Activated B cell treated with CpG ODN at 0.5 μM for 24 hours (primary cell): ENCODE measurements at regions of chr17 and their contacts with region 1.

Region 1: DNA sequence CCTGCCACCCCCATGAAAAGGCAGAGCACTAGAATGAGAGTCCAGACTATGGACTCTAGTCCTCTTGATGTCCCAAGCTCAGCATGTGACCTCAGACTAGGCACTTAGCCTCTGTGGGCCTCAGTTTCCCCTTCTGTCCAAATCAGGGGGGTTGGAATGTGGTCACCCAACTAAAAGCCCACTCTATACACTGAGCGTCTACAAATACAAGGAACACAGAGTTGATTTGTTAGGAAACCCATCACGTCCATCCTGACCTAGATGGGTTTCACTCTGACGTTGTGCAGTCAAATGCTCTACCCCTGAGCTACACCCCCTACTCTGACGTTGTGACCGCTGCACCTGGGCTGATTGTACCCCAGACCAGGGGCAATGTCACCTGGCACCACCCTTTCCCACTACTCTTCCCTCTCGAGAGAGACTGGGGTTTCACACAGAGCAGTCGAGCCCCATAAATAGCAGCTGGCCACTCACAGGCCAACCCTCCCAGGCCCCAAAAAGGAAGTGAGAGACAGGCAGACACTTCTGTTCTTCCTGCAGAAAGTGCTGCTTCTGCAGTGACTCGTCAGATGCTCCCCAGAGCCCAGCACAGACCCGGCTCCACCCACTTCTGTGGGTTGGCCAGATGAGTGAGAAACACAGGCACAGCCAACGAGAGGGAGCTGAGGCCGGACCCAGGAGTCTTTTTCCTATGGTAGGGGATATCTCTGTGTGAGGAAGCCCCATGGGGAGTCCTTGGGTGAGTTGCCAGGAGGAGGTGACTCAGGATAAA is 16.1 kb upstream of the TNFRSF13B start:
- DNase-seq: peak; percentile 78
- ATAC-seq: peak; percentile 80
- H3K4me3 Mint-ChIP-seq: peak overlapping the region; percentile 84
- H3K27ac Mint-ChIP-seq: peak overlapping the region; percentile 97
- H3K4me1 Mint-ChIP-seq: peaks cover 78% of the 10 kb centered on the region
- H3K27me3 Mint-ChIP-seq: no peaks in the 10 kb centered on the region
- CTCF ChIP-seq: no peak

Region 2: DNA sequence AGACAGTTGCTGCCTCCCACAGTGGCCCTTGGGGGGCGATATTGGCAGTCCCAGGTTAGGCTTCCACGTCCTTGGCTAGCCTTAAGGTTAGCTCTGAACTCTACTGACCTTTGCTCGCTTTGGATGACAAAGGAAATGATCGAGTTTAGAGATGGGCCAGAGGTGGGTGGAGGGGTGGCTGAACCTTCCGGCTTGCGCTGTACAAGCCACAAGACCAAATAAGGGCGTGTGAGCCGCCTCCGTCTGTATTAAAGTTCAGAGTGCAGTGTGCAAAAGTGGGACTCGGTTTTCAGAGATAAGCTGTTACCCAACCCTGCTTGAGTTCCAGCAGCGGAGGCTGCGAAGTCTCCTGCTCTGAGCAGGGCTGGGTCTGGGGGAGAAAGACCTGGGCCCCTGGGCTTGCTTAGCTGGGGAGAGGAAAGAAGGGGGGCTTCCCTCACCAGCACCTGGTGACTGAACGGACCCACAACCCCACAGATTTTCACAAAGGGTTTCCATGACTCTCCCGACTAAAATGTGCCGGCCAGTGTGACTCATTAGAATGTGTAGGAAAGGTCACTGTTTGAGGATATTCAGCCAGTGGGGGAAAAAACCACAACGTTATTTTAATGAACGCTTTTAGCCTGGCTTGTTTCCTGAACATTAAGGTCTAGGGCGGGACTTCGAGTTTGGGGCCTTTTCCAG is 701.9 kb before region 1 on chr17:
- CTCF ChIA-PET with region 1: no interaction called
- POLR2A ChIA-PET with region 1: no interaction called
- intact Hi-C with region 1: no loop called
- DNase-seq: peak; percentile 41
- ATAC-seq: peak; percentile 74
- H3K4me3 Mint-ChIP-seq: peak overlapping the region; percentile 82
- H3K27ac Mint-ChIP-seq: peak overlapping the region; percentile 99
- H3K4me1 Mint-ChIP-seq: peaks cover 64% of the 10 kb centered on the region
- H3K27me3 Mint-ChIP-seq: no peaks in the 10 kb centered on the region
- CTCF ChIP-seq: no peak

Region 3: GRCh38 chr17:16477255-16477654 is 510.8 kb before region 1 on chr17:
- CTCF ChIA-PET with region 1: no interaction called
- POLR2A ChIA-PET with region 1: no interaction called
- intact Hi-C with region 1: no loop called
- DNase-seq: no peak
- ATAC-seq: no peak
- H3K4me3 Mint-ChIP-seq: no peak overlapping the region
- H3K27ac Mint-ChIP-seq: no peak overlapping the region
- H3K4me1 Mint-ChIP-seq: no peaks in the 10 kb centered on the region
- H3K27me3 Mint-ChIP-seq: no peaks in the 10 kb centered on the region
- CTCF ChIP-seq: no peak

Region 4: GRCh38 chr17:16915752-16916556 is 72.1 kb before region 1 on chr17:
- CTCF ChIA-PET with region 1: interaction called, 12 read pairs
- POLR2A ChIA-PET with region 1: interaction called, 14 read pairs
- intact Hi-C with region 1: loop called (anchors 1 kb)
- DNase-seq: peak; percentile 48
- ATAC-seq: peak; percentile 74
- H3K4me3 Mint-ChIP-seq: no peak overlapping the region
- H3K27ac Mint-ChIP-seq: no peak overlapping the region
- H3K4me1 Mint-ChIP-seq: peaks cover 22% of the 10 kb centered on the region
- H3K27me3 Mint-ChIP-seq: no peaks in the 10 kb centered on the region
- CTCF ChIP-seq: no peak

Region 5: DNA sequence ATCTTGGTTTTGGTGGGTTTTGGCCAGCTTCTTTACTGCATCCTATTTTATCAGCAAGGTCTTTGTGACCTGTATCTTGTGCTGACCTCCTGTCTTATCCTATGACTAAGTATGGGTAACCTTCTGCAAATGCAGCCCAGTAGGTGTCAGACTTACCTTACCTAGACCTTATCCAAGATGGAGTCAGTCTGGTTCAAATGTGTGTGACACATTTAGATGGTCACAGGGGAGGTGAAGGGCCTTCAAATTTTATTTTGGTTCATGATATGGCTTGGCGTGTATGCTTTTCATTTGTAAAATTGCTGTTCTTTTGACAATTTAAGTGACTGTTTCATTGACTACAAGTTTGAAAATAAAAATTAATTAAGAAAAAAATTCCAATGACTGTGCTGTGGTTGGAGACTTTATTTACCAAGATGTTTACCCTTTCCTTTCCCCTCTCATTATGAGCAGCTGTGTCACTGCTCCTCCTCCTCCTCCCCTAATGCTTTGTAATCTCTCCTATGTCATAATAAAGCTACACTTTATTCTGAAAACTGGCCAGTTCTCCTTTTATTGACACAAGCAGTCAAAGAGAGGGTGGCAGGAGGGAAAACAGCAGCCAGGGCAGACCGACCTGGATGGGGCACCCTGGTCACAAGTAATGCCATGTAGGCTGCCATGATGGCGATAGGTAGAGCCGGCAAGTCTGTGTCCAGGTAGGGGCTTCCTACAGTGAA is 65.5 kb before region 1 on chr17:
- CTCF ChIA-PET with region 1: interaction called, 12 read pairs
- POLR2A ChIA-PET with region 1: interaction called, 5 read pairs
- intact Hi-C with region 1: loop called (anchors 1 kb)
- DNase-seq: no peak
- ATAC-seq: peak; percentile 42
- H3K4me3 Mint-ChIP-seq: no peak overlapping the region
- H3K27ac Mint-ChIP-seq: peak overlapping the region; percentile 16
- H3K4me1 Mint-ChIP-seq: peaks cover 2% of the 10 kb centered on the region
- H3K27me3 Mint-ChIP-seq: no peaks in the 10 kb centered on the region
- CTCF ChIP-seq: no peak

Region 6: DNA sequence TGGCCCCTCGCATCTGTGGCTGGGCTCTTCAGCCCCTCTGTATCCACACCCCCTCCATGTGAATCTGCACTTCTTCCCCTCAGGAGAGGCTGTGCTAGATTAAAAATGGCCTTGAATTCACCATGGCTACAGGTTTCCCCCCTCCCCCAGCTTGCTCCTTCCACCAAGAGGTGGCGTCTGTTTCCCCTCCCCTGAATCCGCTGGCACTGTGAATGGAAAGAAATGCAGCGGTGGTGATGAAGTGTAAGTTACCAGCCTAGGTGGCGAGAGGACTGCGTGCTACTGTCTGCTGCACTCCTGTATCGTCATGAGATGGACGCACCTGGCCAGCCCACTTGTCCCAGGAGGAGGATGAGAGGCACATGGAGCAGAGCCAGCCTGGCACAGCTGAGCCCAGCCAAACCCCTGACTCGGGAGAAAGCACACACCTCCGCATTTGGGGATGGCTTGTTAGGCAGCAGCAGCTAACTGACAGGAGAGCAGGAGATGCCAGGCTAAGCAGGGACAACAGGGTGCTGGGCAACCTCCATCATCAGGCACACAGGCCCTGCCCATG is 42.3 kb before region 1 on chr17:
- CTCF ChIA-PET with region 1: interaction called, 4 read pairs
- POLR2A ChIA-PET with region 1: interaction called, 11 read pairs
- intact Hi-C with region 1: loop called (anchors 2 kb)
- DNase-seq: no peak
- ATAC-seq: no peak
- H3K4me3 Mint-ChIP-seq: peak overlapping the region; percentile 7
- H3K27ac Mint-ChIP-seq: peak overlapping the region; percentile 50
- H3K4me1 Mint-ChIP-seq: peaks cover 59% of the 10 kb centered on the region
- H3K27me3 Mint-ChIP-seq: no peaks in the 10 kb centered on the region
- CTCF ChIP-seq: no peak

Region 7: DNA sequence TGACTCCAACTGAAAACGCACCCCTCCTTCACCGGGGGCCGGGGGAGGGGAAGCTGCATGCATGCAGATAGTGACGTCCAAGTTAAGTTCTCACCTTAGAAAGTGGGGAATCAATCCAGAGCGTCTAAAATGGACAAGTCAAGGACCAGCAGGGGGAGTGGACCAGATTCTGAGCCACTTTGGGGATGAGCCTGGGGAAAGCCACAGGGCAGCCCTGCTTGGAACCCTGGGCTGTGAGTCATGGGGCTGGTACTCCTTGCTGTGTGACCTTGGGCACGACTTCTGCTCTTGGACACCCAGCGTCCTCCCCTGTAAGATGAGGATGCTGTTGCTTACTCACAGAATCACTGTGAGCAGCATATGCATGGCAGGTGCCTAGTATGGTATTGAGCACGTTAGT is 25.2 kb before region 1 on chr17:
- CTCF ChIA-PET with region 1: interaction called, 16 read pairs
- POLR2A ChIA-PET with region 1: interaction called, 948 read pairs
- intact Hi-C with region 1: no loop called
- DNase-seq: no peak
- ATAC-seq: peak; percentile 35
- H3K4me3 Mint-ChIP-seq: peak overlapping the region; percentile 19
- H3K27ac Mint-ChIP-seq: peak overlapping the region; percentile 71
- H3K4me1 Mint-ChIP-seq: peaks cover 85% of the 10 kb centered on the region
- H3K27me3 Mint-ChIP-seq: no peaks in the 10 kb centered on the region
- CTCF ChIP-seq: no peak

Region 8: GRCh38 chr17:16973760-16974540 is 14.1 kb before region 1 on chr17:
- CTCF ChIA-PET with region 1: interaction called, 104 read pairs
- POLR2A ChIA-PET with region 1: interaction called, 948 read pairs
- intact Hi-C with region 1: loop called (anchors 1 kb)
- DNase-seq: peak; percentile 48
- ATAC-seq: peak; percentile 39
- H3K4me3 Mint-ChIP-seq: peak overlapping the region; percentile 91
- H3K27ac Mint-ChIP-seq: peak overlapping the region; percentile 94
- H3K4me1 Mint-ChIP-seq: peaks cover 96% of the 10 kb centered on the region
- H3K27me3 Mint-ChIP-seq: no peaks in the 10 kb centered on the region
- CTCF ChIP-seq: no peak

Region 9: DNA sequence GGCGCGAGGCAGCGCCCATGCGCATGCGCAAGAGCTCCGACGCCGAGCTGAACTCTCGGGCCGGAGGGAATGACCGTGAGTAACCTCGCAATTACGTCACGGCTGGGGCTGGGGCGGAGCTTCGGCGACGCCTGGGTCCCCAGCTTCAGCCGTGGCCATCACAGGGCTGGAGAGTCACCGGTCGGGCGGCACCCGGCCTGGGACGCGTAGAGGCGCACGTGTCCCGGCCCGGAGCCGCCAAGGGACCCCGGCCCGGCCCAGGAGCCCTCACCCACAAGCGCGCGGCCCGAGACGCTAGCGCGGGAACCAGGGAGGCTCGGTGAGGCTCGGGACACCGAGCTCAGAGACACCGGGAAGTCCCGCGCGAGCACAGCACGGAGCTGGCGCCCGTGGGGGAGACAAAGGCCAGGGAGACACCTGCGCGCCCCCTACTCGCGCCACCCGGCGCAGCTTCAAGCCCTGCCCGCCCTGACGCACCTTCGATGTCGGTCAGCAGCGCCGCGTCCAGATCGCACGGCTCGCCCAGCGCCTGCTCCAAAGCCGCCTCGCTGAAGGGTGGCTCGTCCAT is 848.3 kb after region 1 on chr17:
- CTCF ChIA-PET with region 1: no interaction called
- POLR2A ChIA-PET with region 1: no interaction called
- intact Hi-C with region 1: loop called (anchors 5 kb)
- DNase-seq: peak; percentile 93
- ATAC-seq: peak; percentile 59
- H3K4me3 Mint-ChIP-seq: peak overlapping the region; percentile 86
- H3K27ac Mint-ChIP-seq: peak overlapping the region; percentile 66
- H3K4me1 Mint-ChIP-seq: peaks cover 70% of the 10 kb centered on the region
- H3K27me3 Mint-ChIP-seq: no peaks in the 10 kb centered on the region
- CTCF ChIP-seq: no peak

Region 10: DNA sequence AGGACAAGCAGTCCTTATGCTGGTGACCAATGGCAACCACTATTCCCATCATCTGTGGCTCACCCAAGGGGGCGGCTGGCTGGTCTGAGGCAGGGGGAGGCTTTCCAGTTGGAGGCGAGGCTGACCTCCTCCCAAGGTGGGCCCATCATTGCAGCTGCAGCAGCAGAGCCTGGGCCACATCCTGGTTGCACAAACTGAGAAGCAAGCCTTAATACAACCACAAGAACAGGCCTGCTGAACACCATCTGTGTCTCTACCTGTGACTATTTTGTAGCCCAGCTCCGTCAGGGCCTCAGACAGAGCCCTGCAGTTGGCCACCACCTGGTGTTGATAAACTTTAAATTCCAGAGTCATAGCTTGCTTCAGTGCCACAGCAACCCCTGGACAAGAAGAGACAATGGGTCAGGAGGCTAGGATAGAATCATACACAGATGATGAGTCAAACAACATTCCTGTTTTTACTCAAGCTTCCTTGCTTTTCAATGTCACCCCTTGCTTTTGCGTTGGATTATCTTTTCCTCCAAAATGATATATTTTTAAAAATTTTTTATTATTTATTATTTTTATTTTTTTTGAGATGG is 1345.0 kb after region 1 on chr17:
- CTCF ChIA-PET with region 1: no interaction called
- POLR2A ChIA-PET with region 1: no interaction called
- intact Hi-C with region 1: no loop called
- DNase-seq: no peak
- ATAC-seq: no peak
- H3K4me3 Mint-ChIP-seq: no peak overlapping the region
- H3K27ac Mint-ChIP-seq: no peak overlapping the region
- H3K4me1 Mint-ChIP-seq: no peaks in the 10 kb centered on the region
- H3K27me3 Mint-ChIP-seq: no peaks in the 10 kb centered on the region
- CTCF ChIP-seq: no peak